Prostate gland (tissue), 2 donors: ENCODE measurements at regions of chr17 and their contacts with region 1.

Region 1: DNA sequence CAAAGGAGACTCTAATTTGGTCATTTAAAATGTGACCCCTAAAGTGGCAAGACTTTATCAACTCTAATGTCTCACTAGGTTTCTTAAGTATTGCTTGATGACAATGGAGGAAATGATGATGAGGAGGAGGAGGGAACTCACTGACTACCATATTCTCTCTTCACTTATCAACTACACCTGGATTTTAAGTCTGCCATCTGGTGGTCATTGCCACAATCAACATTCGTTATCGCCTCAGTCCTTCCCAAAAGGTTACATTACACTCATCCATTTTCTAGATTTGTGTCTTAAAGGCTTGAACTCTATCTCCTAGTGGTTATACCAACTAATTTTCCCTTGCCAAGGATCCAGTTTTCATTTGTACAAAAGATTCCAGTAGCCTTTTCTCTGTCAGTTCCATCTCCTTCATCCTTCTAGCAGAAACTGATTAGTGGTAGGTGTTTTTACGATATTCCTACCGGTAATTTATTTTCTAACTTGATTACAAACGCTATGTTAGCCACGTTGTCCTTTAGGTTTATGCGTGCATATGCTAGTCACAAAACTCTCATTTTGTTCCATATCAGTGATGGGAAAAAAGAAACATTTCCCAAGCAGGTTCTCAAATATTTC is 114.6 kb upstream of the NOG start:
- DNase-seq: no peak
- H3K4me3 ChIP-seq: no peak overlapping the region
- H3K27ac ChIP-seq: no peak overlapping the region
- H3K4me1 ChIP-seq: no peaks in the 10 kb centered on the region
- H3K27me3 ChIP-seq: no peaks in the 10 kb centered on the region
- CTCF ChIP-seq: peak in 3 of 4 experiments; percentile 22 to 46 (median 41)
- POLR2A ChIP-seq: no peak

Region 2: GRCh38 chr17:55845385-55845784 is 633.6 kb before region 1 on chr17:
- intact Hi-C with region 1: loop called (anchors 10 kb)
- DNase-seq: peak; percentile 20
- H3K4me3 ChIP-seq: no peak overlapping the region
- H3K27ac ChIP-seq: no peak overlapping the region
- H3K4me1 ChIP-seq: no peaks in the 10 kb centered on the region
- H3K27me3 ChIP-seq: no peaks in the 10 kb centered on the region
- CTCF ChIP-seq: peak in 3 of 4 experiments; percentile 38 to 60 (median 50)
- POLR2A ChIP-seq: no peak

Region 3: DNA sequence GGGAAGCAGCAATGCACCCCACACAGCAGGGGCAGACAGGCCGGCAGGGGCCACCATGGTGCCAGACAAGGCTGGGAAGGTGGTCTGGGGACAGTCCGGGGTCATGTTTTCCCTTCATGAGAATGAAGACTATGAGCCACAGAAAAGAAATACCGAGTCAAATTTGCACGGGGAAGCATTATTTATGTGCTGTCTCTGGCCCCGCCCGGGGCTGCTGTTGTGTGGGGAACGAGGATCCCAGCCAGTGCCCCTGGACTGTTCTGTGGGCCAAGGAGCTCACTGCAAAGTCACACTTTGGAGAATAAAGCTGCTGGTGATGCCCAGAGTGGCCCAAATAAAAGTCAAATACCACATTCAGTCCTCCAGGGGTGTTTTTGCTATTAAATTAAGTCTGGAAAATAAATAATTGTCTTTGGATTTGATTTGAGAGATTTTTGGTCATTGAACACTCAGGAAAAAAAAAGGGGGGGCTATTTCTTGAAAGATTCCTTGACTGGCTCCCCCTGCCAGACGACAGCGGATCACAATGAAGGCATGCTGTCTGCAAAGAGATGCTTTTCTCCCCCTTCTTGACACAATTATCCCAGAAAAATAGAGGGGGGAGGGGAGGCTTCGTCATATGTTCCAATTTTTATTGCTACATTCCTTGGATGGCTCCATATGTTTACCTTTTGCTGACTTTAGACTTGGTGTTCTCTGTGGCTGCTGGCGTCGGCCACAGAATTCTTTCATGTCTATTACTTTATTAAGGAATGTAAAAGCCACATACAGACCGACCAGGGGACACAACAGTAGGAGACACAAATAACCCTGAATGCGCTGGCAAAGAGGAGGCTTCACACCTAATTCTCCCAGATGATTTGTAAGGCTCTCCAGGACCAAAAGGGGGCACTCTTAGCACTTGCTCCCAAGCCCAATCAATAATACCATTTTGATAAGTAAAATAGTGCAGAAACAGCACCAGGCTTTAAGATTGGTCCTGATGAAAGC is 352.8 kb before region 1 on chr17:
- intact Hi-C with region 1: loop called (anchors 10 kb)
- DNase-seq: peak; percentile 79
- H3K4me3 ChIP-seq: no peak overlapping the region
- H3K27ac ChIP-seq: peak overlapping the region; percentile 20 to 53
- H3K4me1 ChIP-seq: no peaks in the 10 kb centered on the region
- H3K27me3 ChIP-seq: no peaks in the 10 kb centered on the region
- CTCF ChIP-seq: peak in 3 of 4 experiments; percentile 30 to 57 (median 46)
- POLR2A ChIP-seq: no peak

Region 4: DNA sequence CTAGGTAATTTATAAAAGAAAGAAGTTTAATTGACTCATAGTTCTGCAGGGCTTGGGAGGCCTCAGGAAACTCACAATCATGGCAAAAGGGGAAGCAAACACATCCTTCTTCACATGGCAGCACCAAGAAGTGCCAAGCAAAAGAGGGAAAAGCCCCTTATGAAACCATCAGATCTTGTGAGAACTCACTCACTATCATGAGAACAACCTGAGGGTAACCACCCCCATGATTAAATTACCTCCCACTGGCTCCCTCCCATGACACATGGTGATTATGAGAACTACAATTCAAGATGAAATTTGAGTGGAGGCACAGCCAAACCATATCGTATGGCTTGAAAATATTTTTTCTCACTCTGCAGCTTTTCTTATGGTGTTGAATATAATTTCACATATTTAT is 173.9 kb before region 1 on chr17:
- intact Hi-C with region 1: no loop called
- DNase-seq: no peak
- H3K4me3 ChIP-seq: no peak overlapping the region
- H3K27ac ChIP-seq: no peak overlapping the region
- H3K4me1 ChIP-seq: no peaks in the 10 kb centered on the region
- H3K27me3 ChIP-seq: no peaks in the 10 kb centered on the region
- CTCF ChIP-seq: no peak
- POLR2A ChIP-seq: no peak